WTC11 (cell line): ENCODE measurements at regions of chr10 and their contacts with region 1.

Region 1: GRCh38 chr10:102225646-102226541 is at the start of gene ELOVL3:
- DNase-seq: peak; percentile 96
- ATAC-seq: peak; percentile 92
- H3K4me3 Mint-ChIP-seq: peak within 1 kb of the TSS; percentile 56
- H3K27ac Mint-ChIP-seq: no peak within 1 kb of the TSS
- H3K4me1 Mint-ChIP-seq: peaks cover 8% of the 10 kb centered on the region; the same call in 1 of the 2 replicates
- H3K27me3 Mint-ChIP-seq: peaks cover 96% of the 10 kb centered on the region
- CTCF ChIP-seq: no peak
- total RNA-seq, gene ELOVL3: 0.17 to 0.46 TPM (median 0.34 TPM) in 3 replicates

Region 2: GRCh38 chr10:102045292-102045691 is 180.6 kb before region 1 on chr10:
- CTCF ChIA-PET with region 1: no interaction called
- POLR2A ChIA-PET with region 1: no interaction called
- DNase-seq: no peak
- ATAC-seq: no peak
- H3K4me3 Mint-ChIP-seq: no peak overlapping the region
- H3K27ac Mint-ChIP-seq: peak overlapping the region; percentile 21; the same call in 1 of the 2 replicates
- H3K4me1 Mint-ChIP-seq: peaks cover 4% of the 10 kb centered on the region
- H3K27me3 Mint-ChIP-seq: no peaks in the 10 kb centered on the region
- CTCF ChIP-seq: no peak

Region 3: GRCh38 chr10:102175415-102175814 is 50.5 kb before region 1 on chr10:
- CTCF ChIA-PET with region 1: interaction called, 102 read pairs
- POLR2A ChIA-PET with region 1: no interaction called
- DNase-seq: no peak
- ATAC-seq: no peak
- H3K4me3 Mint-ChIP-seq: no peak overlapping the region
- H3K27ac Mint-ChIP-seq: no peak overlapping the region
- H3K4me1 Mint-ChIP-seq: no peaks in the 10 kb centered on the region
- H3K27me3 Mint-ChIP-seq: peaks cover 12% of the 10 kb centered on the region
- CTCF ChIP-seq: no peak

Region 4: DNA sequence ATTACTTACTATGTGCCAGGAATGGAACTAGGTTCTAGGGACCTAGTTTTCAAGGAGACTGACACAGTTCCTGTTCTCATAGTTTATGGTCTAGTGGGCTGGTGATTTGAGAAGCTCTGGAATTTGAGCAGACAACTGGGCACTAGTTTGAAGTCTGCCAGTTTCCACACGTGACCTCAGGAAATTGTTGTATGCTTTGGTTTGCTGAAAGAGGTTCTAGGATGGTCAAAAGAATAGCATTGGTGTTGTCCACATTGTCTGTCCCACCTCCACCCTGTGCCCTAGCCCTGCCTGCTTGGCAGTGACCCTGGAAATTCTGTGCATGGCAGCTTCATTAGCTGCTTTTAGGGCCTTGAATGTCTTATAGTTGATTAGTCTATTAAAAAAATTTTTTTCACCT is 48.2 kb after region 1 on chr10:
- CTCF ChIA-PET with region 1: interaction called, 26 read pairs
- POLR2A ChIA-PET with region 1: no interaction called
- DNase-seq: no peak
- ATAC-seq: no peak
- H3K4me3 Mint-ChIP-seq: no peak overlapping the region
- H3K27ac Mint-ChIP-seq: no peak overlapping the region
- H3K4me1 Mint-ChIP-seq: no peaks in the 10 kb centered on the region
- H3K27me3 Mint-ChIP-seq: no peaks in the 10 kb centered on the region
- CTCF ChIP-seq: no peak

Region 5: GRCh38 chr10:102334101-102334500 is 108.2 kb after region 1 on chr10:
- CTCF ChIA-PET with region 1: interaction called, 27 read pairs
- POLR2A ChIA-PET with region 1: no interaction called
- DNase-seq: no peak
- ATAC-seq: no peak
- H3K4me3 Mint-ChIP-seq: no peak overlapping the region
- H3K27ac Mint-ChIP-seq: no peak overlapping the region
- H3K4me1 Mint-ChIP-seq: no peaks in the 10 kb centered on the region
- H3K27me3 Mint-ChIP-seq: peaks cover 30% of the 10 kb centered on the region
- CTCF ChIP-seq: no peak

Region 6: GRCh38 chr10:102375250-102375649 is 149.4 kb after region 1 on chr10:
- CTCF ChIA-PET with region 1: interaction called, 39 read pairs
- POLR2A ChIA-PET with region 1: no interaction called
- DNase-seq: peak; percentile 36
- ATAC-seq: peak; percentile 90
- H3K4me3 Mint-ChIP-seq: no peak overlapping the region
- H3K27ac Mint-ChIP-seq: no peak overlapping the region
- H3K4me1 Mint-ChIP-seq: no peaks in the 10 kb centered on the region
- H3K27me3 Mint-ChIP-seq: no peaks in the 10 kb centered on the region
- CTCF ChIP-seq: no peak

Region 7: DNA sequence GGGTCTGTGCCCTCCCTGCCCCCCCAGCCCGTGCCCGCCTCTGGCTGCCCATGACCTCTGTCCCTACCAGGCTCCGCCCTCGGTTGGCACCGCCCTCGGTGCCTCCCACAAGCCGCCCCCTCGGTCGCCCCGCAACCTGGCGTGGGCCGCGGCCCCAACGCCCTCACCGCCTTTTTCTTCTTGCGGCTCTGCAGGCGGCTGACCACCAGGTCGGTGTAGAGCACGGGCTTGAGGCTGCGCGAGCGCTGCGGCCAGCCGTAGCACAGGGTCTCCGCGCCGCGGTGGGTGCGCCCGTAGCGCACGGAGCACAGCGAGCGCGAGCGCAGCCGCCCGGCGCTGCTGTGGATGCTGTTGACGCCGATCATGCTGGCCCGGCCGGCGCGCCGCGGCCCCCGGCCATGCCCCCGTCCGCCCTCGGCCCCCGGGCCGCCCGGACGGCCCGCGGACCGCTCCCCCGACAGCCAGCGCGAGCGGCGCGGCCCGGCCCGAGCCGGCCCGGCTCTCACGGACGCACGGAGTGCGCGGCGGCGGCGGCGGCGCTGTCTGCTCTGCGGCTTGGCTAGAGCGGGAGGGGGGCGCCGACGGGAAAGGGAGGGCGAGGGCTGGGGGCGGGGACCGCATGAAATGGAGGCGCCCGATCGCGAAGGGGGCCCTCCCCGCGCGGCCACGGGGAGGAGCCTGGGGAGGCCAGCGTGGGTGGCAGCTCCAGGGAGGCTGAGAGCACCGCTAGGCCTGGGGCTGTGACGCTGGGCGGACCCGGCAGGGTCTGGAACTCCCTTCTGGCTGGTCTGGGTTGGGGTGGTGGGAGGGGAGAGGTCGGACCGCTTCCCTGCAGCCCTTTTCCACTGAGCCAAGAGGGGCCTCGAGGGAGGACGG is 183.1 kb after region 1 on chr10:
- CTCF ChIA-PET with region 1: interaction called, 34 read pairs
- POLR2A ChIA-PET with region 1: no interaction called
- DNase-seq: peak; percentile 55
- ATAC-seq: peak; percentile 29
- H3K4me3 Mint-ChIP-seq: peak overlapping the region; percentile 69
- H3K27ac Mint-ChIP-seq: no peak overlapping the region
- H3K4me1 Mint-ChIP-seq: peaks cover 30% of the 10 kb centered on the region
- H3K27me3 Mint-ChIP-seq: peaks cover 67% of the 10 kb centered on the region
- CTCF ChIP-seq: no peak